HEK293T (cell line): ENCODE measurements at regions of chr9 and their contacts with region 1.

Region 1: GRCh38 chr9:129823935-129824601 is at the start of gene TOR1A:
- DNase-seq: peak; percentile 91

Region 2: DNA sequence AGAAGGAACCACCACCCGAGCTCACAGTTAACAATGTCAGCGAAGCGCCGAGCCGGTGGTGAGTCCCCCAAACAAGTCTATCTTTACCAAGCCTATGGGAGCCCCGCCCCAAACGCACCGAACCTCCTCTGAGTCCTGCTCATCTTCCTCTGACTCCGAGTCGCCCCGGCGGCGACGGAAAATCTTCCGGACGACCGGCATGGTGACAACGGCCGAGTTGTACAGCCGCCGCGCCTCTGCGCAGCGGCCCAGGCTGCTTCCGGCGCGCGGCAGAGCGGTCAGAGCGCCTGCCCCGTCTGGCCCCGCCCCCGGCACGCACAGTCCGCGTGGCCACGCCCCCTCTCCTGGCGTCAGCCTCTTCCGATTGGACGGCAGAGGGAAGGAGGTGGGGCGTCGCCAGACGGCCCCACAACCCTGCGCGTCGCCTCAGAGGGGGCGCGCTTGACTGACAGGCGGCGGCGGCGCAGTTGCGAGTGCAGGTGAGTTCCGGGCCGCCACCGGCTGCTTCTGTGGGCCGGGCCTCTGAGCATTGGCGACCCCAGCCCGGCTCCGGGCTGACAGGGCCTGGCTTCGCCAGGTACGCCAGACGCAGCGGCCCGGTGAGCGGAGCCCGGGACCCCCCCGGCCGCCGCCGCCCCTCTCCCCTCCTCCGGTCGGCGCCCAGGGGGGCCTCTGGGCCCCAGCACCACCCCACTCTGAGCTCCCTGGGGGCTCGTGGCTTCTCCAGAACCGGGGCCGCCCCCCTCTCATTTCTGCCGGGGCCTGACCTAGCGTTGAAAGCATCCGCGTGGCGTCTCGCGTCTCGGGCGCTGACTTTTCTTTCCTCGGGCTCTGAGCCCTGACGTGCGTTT is 11.2 kb after region 1 on chr9 and contains the starts of genes C9orf78 and USP20:
- CTCF ChIA-PET with region 1: no interaction called
- POLR2A ChIA-PET with region 1: interaction called, 12 read pairs
- DNase-seq: peak; percentile 99

Region 3: GRCh38 chr9:129932303-129933151 is 108.5 kb after region 1 on chr9:
- CTCF ChIA-PET with region 1: no interaction called
- POLR2A ChIA-PET with region 1: no interaction called
- DNase-seq: no peak